AG04449 (cell line): ENCODE measurements at regions of chr20 and their contacts with region 1.

Region 1: GRCh38 chr20:31661625-31662371 is 24.1 kb downstream of the COX4I2 start:
- DNase-seq: no peak
- H3K4me3 ChIP-seq: peak overlapping the region; percentile 48
- CTCF ChIP-seq: peak; percentile 77

Region 2: GRCh38 chr20:31605031-31605901 is 56.5 kb before region 1 on chr20 and contains the start of gene ID1:
- CTCF ChIA-PET with region 1: interaction called, 19 read pairs
- POLR2A ChIA-PET with region 1: interaction called, 3 read pairs
- DNase-seq: no peak
- H3K4me3 ChIP-seq: peak within 1 kb of the TSS; percentile 88
- CTCF ChIP-seq: no peak

Region 3: GRCh38 chr20:31638317-31638716 is 23.5 kb before region 1 on chr20:
- CTCF ChIA-PET with region 1: interaction called, 149 read pairs
- POLR2A ChIA-PET with region 1: interaction called, 4 read pairs
- DNase-seq: no peak
- H3K4me3 ChIP-seq: no peak overlapping the region
- CTCF ChIP-seq: no peak

Region 4: GRCh38 chr20:31674895-31675827 is 13.4 kb after region 1 on chr20:
- CTCF ChIA-PET with region 1: interaction called, 73 read pairs
- POLR2A ChIA-PET with region 1: interaction called, 3 read pairs
- DNase-seq: peak; percentile 34
- H3K4me3 ChIP-seq: no peak overlapping the region
- CTCF ChIP-seq: no peak

Region 5: GRCh38 chr20:31691646-31692275 is 30.0 kb after region 1 on chr20:
- CTCF ChIA-PET with region 1: interaction called, 26 read pairs
- POLR2A ChIA-PET with region 1: interaction called, 5 read pairs
- DNase-seq: peak; percentile 41
- H3K4me3 ChIP-seq: no peak overlapping the region
- CTCF ChIP-seq: no peak

Region 6: DNA sequence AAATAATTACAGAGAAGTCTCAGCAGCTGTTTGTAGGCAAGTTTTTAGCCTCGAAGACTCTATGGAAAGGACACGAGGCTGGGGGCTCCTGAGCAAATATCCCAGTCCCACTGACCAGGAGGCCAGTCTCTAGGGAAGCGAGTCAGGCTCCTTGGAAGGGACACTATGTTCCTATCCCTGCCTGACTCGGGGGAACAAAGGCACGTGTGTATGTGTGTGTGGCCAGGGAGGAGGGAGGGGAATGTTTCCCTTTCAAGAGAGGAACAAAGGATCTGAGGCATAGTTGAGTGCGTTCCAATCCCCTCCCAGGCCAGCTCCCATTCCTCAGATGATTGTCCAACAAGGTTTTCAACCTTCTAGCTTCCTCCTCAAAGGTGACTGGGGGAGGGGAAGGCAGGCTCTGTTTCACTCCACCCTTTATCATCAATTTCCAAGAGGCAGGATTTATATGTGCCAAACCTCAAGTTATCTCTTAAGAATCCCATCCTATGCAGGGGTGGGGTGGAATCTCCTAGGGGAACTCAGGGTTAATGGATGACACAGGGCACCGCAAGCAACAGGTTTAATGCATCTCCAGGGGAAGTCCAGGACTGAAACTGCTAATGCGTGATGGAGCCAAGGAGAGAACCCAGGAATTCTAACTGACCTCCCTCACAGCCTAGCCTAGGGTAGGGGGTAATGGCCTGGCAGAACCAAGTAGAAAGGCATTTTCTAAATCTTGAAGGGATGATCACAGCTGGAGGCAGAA is 50.9 kb after region 1 on chr20:
- CTCF ChIA-PET with region 1: interaction called, 534 read pairs
- POLR2A ChIA-PET with region 1: interaction called, 5 read pairs
- DNase-seq: no peak
- H3K4me3 ChIP-seq: peak overlapping the region; percentile 43
- CTCF ChIP-seq: no peak

Region 7: GRCh38 chr20:31738729-31739561 is 77.1 kb after region 1 on chr20 and contains the start of gene TPX2:
- CTCF ChIA-PET with region 1: interaction called, 11 read pairs
- POLR2A ChIA-PET with region 1: no interaction called
- DNase-seq: peak; percentile 83
- H3K4me3 ChIP-seq: peak within 1 kb of the TSS; percentile 97
- CTCF ChIP-seq: peak; percentile 12